HEK293 (cell line): ENCODE measurements at regions of chr5 and their contacts with region 1.

Region 1: DNA sequence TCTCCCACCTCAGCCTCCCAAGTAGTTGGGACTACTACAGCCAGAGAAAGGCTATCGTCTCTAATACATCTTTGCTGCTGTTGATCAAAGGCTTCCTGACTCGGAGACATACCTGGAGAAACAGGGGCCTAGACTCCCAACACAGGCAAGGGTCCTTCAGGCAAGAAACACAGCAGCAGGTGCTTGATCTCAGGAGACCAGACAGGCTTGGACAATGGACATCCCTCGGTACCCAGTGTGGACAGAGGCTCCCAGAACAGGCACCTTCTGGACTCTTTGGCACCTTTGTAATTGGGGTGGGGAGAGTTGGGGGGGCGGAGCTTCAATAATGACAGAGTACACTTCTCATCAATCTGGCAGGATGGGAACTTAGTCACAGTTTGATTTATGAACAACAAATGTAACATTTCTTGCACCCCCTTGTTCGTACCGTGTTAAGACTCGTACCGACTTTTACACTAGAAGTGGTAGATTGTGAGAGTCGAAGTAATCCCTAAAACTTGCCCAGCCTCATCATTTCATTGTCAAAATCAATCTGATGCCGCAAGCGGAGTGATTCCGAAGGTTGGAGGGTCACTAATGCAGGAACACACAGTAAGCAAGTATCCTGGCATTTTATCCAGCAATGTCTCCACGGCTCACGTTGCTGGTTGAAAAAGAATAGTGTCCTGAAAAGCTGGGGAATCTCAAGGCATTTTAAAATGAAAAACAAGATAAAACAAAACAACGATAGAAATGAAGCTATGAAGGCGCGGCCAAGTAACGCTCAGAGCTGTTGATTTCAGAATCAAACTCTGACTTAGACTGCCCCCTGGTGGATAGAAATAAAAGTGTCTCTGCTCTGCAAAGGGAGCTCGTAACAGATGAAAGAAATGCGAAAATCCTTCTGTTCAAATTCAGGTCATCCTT is 46.4 kb upstream of the STK32A start:
- H3K4me3 ChIP-seq: no peak overlapping the region
- H3K27ac ChIP-seq: no peak overlapping the region
- H3K4me1 ChIP-seq: no peaks in the 10 kb centered on the region
- CTCF ChIP-seq: peak; percentile 41

Region 2: DNA sequence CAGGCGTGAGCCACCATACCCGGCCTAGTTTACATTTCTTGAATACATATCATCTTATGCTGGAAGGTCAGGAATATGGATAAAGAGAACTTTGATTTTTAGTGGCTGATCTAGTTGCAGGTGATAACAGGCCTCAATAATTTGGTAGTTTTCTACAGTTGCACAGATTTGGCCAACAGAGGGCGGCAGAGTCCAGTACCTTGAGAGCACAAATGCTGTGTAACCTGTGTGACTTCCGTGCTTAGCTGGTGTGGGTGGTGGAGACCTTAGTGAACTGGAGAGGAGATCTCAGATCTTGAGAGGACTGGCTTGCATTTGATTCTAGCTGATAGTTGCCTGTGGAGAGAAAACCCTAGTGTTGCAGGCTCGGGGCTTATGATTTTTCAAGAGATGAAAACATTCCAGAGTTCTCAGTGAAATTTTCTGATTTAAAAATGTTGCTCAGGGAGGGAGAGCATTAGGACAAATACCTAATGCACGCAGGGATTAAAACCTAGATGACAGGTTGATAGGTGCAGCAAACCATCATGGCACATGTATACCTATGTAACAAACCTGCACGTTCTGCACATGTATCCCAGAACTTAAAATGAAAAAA is 655.1 kb before region 1 on chr5:
- CTCF ChIA-PET with region 1: interaction called, 54 read pairs
- POLR2A ChIA-PET with region 1: no interaction called
- H3K4me3 ChIP-seq: no peak overlapping the region
- H3K27ac ChIP-seq: no peak overlapping the region
- H3K4me1 ChIP-seq: no peaks in the 10 kb centered on the region
- CTCF ChIP-seq: peak; percentile 70; the same call in 1 of the 2 replicates

Region 3: DNA sequence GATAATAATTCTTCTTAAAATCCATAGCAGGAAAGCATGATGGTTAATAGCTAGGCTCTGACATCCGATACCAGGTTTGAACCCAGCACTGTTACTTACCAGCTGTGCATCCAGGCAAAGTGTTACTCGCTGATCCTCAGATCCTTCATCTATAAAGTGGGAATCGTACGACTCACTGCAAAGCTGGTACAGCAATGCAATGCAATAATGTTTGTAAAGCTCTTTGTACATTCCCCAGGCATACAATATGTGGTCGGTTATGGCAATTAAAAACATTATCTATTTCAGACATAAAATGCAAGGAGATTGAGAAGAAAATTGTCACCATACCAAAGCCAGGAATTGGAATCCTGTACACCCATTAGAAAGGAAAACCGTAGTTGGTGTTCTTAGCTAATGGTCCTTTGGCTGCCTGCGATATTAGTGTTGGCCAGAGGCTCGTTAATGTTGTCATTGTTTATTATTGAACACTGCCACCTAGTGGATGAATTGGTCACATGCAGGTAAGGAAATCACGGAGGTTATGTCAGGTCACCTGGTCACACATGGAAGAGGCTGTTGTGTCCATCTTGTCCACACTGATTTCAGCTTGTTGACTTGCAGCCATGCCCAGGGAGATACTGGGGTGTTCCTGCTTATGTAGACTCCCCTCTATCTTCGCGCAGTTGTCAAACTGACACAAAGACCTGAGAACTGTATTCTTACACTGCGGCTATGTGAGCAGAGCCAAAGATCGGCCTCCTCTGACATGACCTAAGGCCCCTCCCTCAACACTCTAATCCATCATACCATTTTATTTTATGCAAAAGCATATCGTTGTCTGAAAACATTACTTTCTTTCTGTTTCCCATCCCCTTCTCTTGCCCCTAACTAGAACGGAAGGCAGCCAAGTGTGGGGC is 222.4 kb before region 1 on chr5:
- CTCF ChIA-PET with region 1: interaction called, 16 read pairs
- POLR2A ChIA-PET with region 1: no interaction called
- H3K4me3 ChIP-seq: no peak overlapping the region
- H3K27ac ChIP-seq: no peak overlapping the region
- H3K4me1 ChIP-seq: no peaks in the 10 kb centered on the region
- CTCF ChIP-seq: peak; percentile 68

Region 4: GRCh38 chr5:147177125-147177840 is 11.2 kb before region 1 on chr5:
- CTCF ChIA-PET with region 1: interaction called, 40 read pairs
- POLR2A ChIA-PET with region 1: no interaction called
- H3K4me3 ChIP-seq: no peak overlapping the region
- H3K27ac ChIP-seq: no peak overlapping the region
- H3K4me1 ChIP-seq: no peaks in the 10 kb centered on the region
- CTCF ChIP-seq: no peak

Region 5: DNA sequence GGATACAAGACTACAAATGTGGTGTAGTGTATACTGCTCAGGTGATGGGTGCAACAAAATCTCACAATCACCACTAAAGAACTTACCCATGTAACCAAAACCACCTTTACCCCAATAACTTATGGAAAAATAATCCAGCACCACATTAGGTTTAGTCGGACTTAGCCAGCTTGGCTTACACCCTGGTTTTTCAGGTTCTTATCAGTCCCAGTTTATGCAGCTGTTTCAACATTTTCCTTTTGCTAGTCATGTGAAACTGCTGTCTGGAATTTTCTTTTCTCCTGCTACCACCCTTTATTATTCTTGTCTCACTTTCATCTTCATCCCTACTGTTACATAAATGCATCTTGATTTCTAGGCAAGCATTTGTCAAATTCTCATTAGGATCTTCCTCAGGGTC is 97.8 kb after region 1 on chr5:
- CTCF ChIA-PET with region 1: no interaction called
- POLR2A ChIA-PET with region 1: no interaction called
- H3K4me3 ChIP-seq: no peak overlapping the region
- H3K27ac ChIP-seq: no peak overlapping the region
- H3K4me1 ChIP-seq: no peaks in the 10 kb centered on the region
- CTCF ChIP-seq: no peak

Region 6: GRCh38 chr5:147369742-147370374 is 181.4 kb after region 1 on chr5:
- CTCF ChIA-PET with region 1: interaction called, 25 read pairs
- POLR2A ChIA-PET with region 1: no interaction called
- H3K4me3 ChIP-seq: no peak overlapping the region
- H3K27ac ChIP-seq: no peak overlapping the region
- H3K4me1 ChIP-seq: no peaks in the 10 kb centered on the region
- CTCF ChIP-seq: peak; percentile 37; the same call in 1 of the 2 replicates